CD4-positive, alpha-beta T cell (primary cell): ENCODE measurements at regions of chr19 and their contacts with region 1.

Region 1: DNA sequence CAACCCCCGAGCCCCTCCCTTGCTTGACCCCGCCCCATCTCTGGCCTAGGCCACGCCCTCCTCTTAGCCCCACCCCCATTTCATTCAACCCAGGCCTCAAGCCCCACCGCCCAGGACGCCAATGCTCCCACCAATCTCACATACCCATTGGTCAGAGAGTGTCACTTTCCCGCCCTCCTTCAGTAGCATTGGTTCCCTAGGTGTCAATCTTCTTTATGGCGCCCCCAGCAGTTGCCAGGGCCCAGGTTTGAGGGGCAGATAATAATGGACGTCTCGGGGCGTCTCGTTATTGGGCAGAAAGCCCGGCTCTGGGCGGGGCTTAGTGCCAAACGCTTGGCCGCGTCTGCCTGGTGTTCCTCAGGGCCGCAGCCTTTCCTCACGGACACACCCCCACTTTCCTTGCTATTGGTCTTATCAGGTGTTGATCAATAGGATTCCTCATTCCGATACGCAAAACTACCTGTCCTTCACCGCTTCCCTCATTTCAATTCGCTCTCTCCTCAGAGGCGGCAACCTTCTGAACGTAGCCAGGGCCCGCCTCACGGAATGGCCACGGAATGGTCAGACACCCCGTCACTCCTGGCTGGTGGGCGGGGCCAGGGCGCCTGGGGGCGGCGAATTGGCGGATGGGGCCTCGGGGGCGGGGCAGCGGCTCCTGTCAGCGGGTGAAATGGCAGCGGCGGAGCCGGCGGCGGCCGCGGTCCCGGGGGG is at the start of gene EVI5L:
- DNase-seq: peak; percentile 99 to 100 (median 100)
- ATAC-seq: peak; percentile 82
- H3K4me3 ChIP-seq: peak within 1 kb of the TSS; percentile 55
- H3K4me3 Mint-ChIP-seq: peak within 1 kb of the TSS; percentile 89
- H3K27ac ChIP-seq: peak within 1 kb of the TSS in 1 of 2 donors; percentile 45
- H3K27ac Mint-ChIP-seq: peak within 1 kb of the TSS; percentile 64
- H3K4me1 ChIP-seq: peaks cover 30% of the 10 kb centered on the region
- H3K4me1 Mint-ChIP-seq: peaks cover 11% of the 10 kb centered on the region
- H3K27me3 ChIP-seq: no peaks in the 10 kb centered on the region
- H3K27me3 Mint-ChIP-seq: no peaks in the 10 kb centered on the region
- CTCF ChIP-seq: no peak
- total RNA-seq, gene EVI5L: 5.2 to 6.0 TPM

Region 2: DNA sequence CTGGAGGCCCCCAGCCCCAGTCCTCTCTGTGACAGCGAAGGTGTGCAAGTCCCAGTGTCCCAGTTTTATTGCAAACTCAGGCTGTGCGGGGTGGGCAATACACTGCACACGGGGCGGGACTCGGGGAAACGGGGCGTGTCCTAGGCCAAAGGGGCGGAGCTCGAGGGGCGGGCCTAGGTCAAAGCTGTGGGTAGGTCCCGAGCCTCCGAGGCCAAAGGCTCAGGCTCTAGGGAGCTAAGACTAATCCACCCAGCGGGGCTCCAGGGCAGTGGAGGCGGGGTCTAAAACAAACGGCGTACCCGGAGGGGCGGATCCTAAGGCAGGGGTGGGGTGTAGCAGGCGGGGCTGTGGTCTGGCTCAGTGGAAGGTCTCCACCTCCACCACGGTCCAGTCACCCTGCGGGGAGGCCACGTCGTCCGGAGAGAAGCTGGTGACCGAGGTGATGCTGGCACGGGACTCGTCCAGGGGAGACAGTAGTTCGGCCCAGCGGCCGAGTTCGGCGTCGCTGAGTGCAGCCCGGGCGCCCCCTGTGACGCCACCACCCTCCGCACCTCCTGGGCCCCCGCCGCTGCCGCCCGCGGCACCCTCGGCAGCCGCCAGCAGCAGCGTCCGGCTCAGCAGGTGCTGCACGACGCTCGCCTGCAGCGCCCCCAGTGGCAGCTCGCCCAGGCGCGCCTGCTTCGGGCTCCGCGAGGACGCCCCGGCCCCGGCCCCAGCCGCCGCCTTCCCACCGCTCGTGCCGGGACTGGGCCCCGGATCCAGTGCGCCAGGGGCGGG is 39.1 kb after region 1 on chr19:
- CTCF ChIA-PET with region 1: interaction called, 6 read pairs
- POLR2A ChIA-PET with region 1: no interaction called
- intact Hi-C with region 1: loop called in 1 of 2 experiments (anchors 2 kb)
- DNase-seq: peak; percentile 69 to 96 (median 84)
- ATAC-seq: peak; percentile 69
- H3K4me3 ChIP-seq: peak overlapping the region; percentile 62
- H3K4me3 Mint-ChIP-seq: peak overlapping the region; percentile 87
- H3K27ac ChIP-seq: peak overlapping the region; percentile 67 to 72
- H3K27ac Mint-ChIP-seq: peak overlapping the region; percentile 80
- H3K4me1 ChIP-seq: peaks cover 70% of the 10 kb centered on the region
- H3K4me1 Mint-ChIP-seq: peaks cover 39% of the 10 kb centered on the region
- H3K27me3 ChIP-seq: peaks cover 20 to 21% of the 10 kb centered on the region in 2 experiments
- H3K27me3 Mint-ChIP-seq: peaks cover 33% of the 10 kb centered on the region
- CTCF ChIP-seq: peak; percentile 69